Endothelial cell of umbilical vein (primary cell): ENCODE measurements at regions of chr4 and their contacts with region 1.

Region 1: DNA sequence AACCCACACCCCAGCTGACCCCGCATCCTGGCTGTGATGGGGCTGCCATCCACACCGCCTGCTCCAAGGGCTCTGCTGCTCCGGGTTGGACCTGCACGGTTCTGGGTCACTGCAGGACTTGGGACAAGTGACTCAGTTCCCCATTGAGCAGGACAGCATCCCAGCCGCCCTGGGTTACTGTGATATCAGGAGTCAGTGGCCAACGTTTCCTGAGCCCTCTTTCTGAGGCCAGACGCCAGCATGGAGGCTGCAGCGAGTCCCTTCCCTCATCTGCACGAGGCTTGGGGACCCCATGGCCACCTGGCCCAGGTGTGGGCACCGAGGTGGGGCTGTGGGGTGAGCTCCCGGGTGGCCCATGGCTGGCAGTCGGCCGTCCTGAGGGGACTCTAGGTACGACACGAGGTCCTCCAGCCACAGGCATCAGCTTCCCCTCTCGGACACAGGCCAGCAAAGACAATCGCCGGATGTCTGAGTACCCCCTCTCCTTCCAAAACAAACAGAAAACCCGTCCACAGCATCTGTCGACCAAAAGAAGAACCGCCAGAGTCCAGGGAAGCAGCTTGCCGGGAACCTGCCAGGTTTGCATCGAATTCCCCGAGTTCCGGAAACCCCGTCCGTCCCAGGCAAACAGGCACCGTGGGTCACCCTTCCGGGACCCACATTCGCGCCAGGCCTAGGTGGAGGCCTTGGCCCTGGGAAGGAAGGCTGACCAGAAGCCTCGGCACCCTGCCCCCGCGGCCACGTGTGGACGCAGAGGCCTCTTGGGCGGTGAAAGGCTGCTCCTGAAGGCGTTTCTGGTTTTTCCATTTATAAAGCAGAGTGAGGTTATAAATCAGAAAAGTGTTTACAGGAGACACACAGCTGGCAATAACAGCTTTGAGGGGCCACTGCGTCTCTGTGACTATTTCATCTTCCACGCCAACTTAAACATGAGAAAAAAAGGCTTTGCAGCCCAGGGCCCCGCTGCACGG is 136.0 kb downstream of the FAM53A start:
- DNase-seq: peak; percentile 80
- H3K4me3 ChIP-seq: no peak overlapping the region
- H3K27ac ChIP-seq: no peak overlapping the region
- H3K4me1 ChIP-seq: peaks cover 8% of the 10 kb centered on the region
- H3K27me3 ChIP-seq: no peaks in the 10 kb centered on the region
- CTCF ChIP-seq: no peak
- POLR2A ChIP-seq: no peak

Region 2: DNA sequence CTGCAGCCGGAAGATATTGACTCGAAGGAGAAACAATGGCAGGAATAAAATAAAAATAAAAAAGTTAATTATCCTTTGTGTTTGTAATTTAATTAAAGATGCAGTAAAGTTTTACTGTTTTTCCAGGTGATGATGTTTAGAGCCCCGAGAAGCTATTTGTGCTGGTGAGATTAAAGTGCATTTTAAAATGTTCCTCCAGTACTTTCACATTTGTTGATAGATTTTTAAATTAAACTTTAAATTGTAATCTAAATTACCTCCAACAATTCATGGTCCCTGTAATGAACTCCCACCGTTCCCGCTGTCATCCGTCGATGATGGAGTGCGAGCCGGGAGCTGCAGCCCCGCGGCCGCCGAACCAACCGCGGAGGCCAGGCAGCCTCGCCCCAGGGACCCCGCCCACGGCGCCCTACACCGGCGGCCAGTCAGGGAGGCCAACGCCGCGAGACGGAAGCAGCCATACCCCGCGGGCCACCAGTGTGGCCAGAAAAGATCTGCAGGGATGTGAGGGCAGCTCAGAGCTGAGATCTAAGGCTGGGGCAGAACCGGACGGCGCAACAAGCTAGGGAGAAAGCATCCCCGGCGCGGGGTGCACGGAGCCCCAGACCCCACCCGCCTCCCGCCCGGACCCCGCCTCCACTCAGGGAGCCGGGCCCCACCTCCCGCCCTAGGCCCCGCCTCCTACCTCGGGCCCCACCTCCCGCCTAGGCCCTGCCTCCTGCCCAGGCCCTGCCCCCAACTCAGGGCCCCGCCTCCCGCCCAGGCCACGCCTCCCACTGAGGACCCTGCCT is 32.0 kb after region 1 on chr4:
- CTCF ChIA-PET with region 1: interaction called, 4 read pairs
- POLR2A ChIA-PET with region 1: no interaction called
- dilution Hi-C with region 1: no loop called
- intact Hi-C with region 1: loop called (anchors 2 kb)
- DNase-seq: peak; percentile 70
- H3K4me3 ChIP-seq: peak overlapping the region; percentile 53 to 75 (median 66)
- H3K27ac ChIP-seq: no peak overlapping the region
- H3K4me1 ChIP-seq: peaks cover 5% of the 10 kb centered on the region
- H3K27me3 ChIP-seq: peaks cover 11% of the 10 kb centered on the region in 2 experiments
- CTCF ChIP-seq: no peak
- POLR2A ChIP-seq: peak; percentile 34

Region 3: GRCh38 chr4:1922821-1923220 is 374.7 kb after region 1 on chr4:
- CTCF ChIA-PET with region 1: no interaction called
- POLR2A ChIA-PET with region 1: no interaction called
- dilution Hi-C with region 1: no loop called
- intact Hi-C with region 1: no loop called
- DNase-seq: no peak
- H3K4me3 ChIP-seq: no peak overlapping the region
- H3K27ac ChIP-seq: no peak overlapping the region
- H3K4me1 ChIP-seq: no peaks in the 10 kb centered on the region
- H3K27me3 ChIP-seq: no peaks in the 10 kb centered on the region
- CTCF ChIP-seq: no peak
- POLR2A ChIP-seq: no peak